ENCODE measurements at regions of chr10 and their contacts with region 1.

Region 1: DNA sequence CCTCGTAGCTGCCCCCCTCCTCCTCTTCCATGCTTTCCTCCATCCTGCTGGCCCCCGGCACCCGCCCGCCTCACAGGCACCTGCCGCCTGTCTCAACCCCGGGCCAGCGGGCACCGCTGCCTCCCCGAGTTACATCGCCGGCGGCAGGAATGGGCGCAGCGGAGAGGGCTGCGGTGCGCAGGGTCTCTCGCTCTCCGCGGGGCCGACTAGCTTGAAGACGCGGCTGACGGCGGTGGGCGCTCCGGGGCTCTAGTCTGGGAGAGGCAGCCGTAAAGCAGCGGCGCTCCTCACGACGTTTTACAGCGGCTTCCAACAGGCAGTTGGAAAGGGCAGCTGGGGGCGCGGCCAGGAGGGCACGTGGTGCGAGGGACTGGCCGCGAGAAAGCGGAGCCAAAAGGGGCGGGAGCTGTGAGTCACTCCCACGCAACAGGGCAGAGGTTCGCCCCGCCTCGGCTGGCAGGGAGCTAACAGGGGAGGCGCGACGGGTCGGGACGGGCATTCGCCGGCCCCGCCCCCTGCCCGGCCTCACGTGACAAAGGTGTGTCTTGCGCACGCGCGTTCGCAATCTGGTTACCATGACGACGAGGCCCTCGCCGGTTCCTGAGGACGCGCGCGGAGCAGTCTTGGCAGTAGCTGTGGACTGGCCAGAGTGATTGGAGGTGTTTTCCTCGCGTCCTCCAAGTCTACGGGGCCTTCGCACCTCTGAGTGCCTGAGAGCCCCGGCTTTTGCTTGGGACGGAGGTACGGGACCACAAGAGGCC is at the start of gene CACUL1:
- DNase-seq: peak; percentile 100
- ATAC-seq: peak; percentile 100
- H3K4me3 ChIP-seq: peak within 1 kb of the TSS; percentile 86 to 88
- H3K27ac ChIP-seq: peak within 1 kb of the TSS in 1 of 2 donors; percentile 55
- H3K4me1 ChIP-seq: no peaks in the 10 kb centered on the region
- H3K27me3 ChIP-seq: no peaks in the 10 kb centered on the region
- total RNA-seq, gene CACUL1: 39.2 to 48.7 TPM

Region 2: DNA sequence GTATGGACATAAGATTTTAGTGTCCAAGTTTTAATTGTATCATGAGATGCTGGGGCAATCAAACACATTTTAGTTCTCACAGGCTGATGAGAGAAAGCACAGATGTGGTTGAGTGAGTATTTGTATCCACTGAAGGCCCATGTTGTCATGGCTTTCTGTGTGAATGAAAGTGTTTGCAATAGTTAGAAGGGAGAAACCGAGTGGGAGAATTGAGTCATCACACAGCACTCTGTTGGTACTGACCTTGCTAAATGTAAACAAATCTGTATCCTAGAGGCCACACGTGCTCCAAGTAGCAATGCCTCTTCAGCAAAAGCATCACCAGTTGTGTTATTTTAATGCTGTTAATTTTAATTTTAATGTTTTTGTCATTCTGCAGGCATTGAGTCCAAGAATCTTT is 1091.2 kb before region 1 on chr10:
- intact Hi-C with region 1: no loop called
- DNase-seq: no peak
- ATAC-seq: no peak
- H3K4me3 ChIP-seq: no peak overlapping the region
- H3K27ac ChIP-seq: no peak overlapping the region
- H3K4me1 ChIP-seq: no peaks in the 10 kb centered on the region
- H3K27me3 ChIP-seq: no peaks in the 10 kb centered on the region

Region 3: GRCh38 chr10:118057361-118057760 is 697.5 kb before region 1 on chr10:
- intact Hi-C with region 1: loop called in 1 of 2 experiments (anchors 10 kb)
- DNase-seq: no peak
- ATAC-seq: no peak
- H3K4me3 ChIP-seq: no peak overlapping the region
- H3K27ac ChIP-seq: no peak overlapping the region
- H3K4me1 ChIP-seq: no peaks in the 10 kb centered on the region
- H3K27me3 ChIP-seq: no peaks in the 10 kb centered on the region

Measured in aorta (tissue), 5 donors.